ENCODE measurements at regions of chr1 and their contacts with region 1.

Region 1: GRCh38 chr1:26602378-26602959 is 72.9 kb downstream of the RPS6KA1 start:
- DNase-seq: no peak
- H3K4me3 ChIP-seq: no peak overlapping the region
- H3K27ac ChIP-seq: no peak overlapping the region
- H3K27me3 ChIP-seq: peaks cover 25% of the 10 kb centered on the region
- CTCF ChIP-seq: peak; percentile 85

Region 2: GRCh38 chr1:26541816-26542711 is 60.4 kb before region 1 on chr1:
- CTCF ChIA-PET with region 1: no interaction called
- POLR2A ChIA-PET with region 1: no interaction called
- DNase-seq: peak; percentile 21
- H3K4me3 ChIP-seq: no peak overlapping the region
- H3K27ac ChIP-seq: peak overlapping the region; percentile 68
- H3K27me3 ChIP-seq: no peaks in the 10 kb centered on the region
- CTCF ChIP-seq: peak; percentile 39

Region 3: GRCh38 chr1:26557008-26557695 is 45.3 kb before region 1 on chr1:
- CTCF ChIA-PET with region 1: no interaction called
- POLR2A ChIA-PET with region 1: no interaction called
- DNase-seq: no peak
- H3K4me3 ChIP-seq: no peak overlapping the region
- H3K27ac ChIP-seq: no peak overlapping the region
- H3K27me3 ChIP-seq: no peaks in the 10 kb centered on the region
- CTCF ChIP-seq: no peak

Region 4: GRCh38 chr1:26614655-26615411 is 12.4 kb after region 1 on chr1:
- CTCF ChIA-PET with region 1: interaction called, 14 read pairs
- POLR2A ChIA-PET with region 1: no interaction called
- DNase-seq: no peak
- H3K4me3 ChIP-seq: no peak overlapping the region
- H3K27ac ChIP-seq: no peak overlapping the region
- H3K27me3 ChIP-seq: no peaks in the 10 kb centered on the region
- CTCF ChIP-seq: no peak

Region 5: GRCh38 chr1:26730695-26731094 is 128.2 kb after region 1 on chr1:
- CTCF ChIA-PET with region 1: interaction called, 20 read pairs
- POLR2A ChIA-PET with region 1: no interaction called
- DNase-seq: peak; percentile 74
- H3K4me3 ChIP-seq: no peak overlapping the region
- H3K27ac ChIP-seq: peak overlapping the region; percentile 82
- H3K27me3 ChIP-seq: no peaks in the 10 kb centered on the region
- CTCF ChIP-seq: no peak

Region 6: GRCh38 chr1:26787706-26788514 is 185.4 kb after region 1 on chr1 and contains the start of gene PIGV:
- CTCF ChIA-PET with region 1: interaction called, 424 read pairs
- POLR2A ChIA-PET with region 1: interaction called, 5 read pairs
- DNase-seq: no peak
- H3K4me3 ChIP-seq: peak within 1 kb of the TSS; percentile 82
- H3K27ac ChIP-seq: peak within 1 kb of the TSS; percentile 99
- H3K27me3 ChIP-seq: no peaks in the 10 kb centered on the region
- CTCF ChIP-seq: 0 out of 2 replicates have a peak, but pooled peaks have one; percentile 7
- polyA plus RNA-seq, gene PIGV: 16.1 and 17.8 TPM in 2 replicates

Region 7: GRCh38 chr1:26811057-26811456 is 208.6 kb after region 1 on chr1:
- CTCF ChIA-PET with region 1: interaction called, 23 read pairs
- POLR2A ChIA-PET with region 1: no interaction called
- DNase-seq: no peak
- H3K4me3 ChIP-seq: no peak overlapping the region
- H3K27ac ChIP-seq: no peak overlapping the region
- H3K27me3 ChIP-seq: no peaks in the 10 kb centered on the region
- CTCF ChIP-seq: no peak

Region 8: GRCh38 chr1:26879793-26880192 is 277.3 kb after region 1 on chr1:
- CTCF ChIA-PET with region 1: interaction called, 13 read pairs
- POLR2A ChIA-PET with region 1: no interaction called
- DNase-seq: no peak
- H3K4me3 ChIP-seq: no peak overlapping the region
- H3K27ac ChIP-seq: no peak overlapping the region
- H3K27me3 ChIP-seq: no peaks in the 10 kb centered on the region
- CTCF ChIP-seq: no peak